ENCODE measurements at regions of chr1 and their contacts with region 1.

Region 1: DNA sequence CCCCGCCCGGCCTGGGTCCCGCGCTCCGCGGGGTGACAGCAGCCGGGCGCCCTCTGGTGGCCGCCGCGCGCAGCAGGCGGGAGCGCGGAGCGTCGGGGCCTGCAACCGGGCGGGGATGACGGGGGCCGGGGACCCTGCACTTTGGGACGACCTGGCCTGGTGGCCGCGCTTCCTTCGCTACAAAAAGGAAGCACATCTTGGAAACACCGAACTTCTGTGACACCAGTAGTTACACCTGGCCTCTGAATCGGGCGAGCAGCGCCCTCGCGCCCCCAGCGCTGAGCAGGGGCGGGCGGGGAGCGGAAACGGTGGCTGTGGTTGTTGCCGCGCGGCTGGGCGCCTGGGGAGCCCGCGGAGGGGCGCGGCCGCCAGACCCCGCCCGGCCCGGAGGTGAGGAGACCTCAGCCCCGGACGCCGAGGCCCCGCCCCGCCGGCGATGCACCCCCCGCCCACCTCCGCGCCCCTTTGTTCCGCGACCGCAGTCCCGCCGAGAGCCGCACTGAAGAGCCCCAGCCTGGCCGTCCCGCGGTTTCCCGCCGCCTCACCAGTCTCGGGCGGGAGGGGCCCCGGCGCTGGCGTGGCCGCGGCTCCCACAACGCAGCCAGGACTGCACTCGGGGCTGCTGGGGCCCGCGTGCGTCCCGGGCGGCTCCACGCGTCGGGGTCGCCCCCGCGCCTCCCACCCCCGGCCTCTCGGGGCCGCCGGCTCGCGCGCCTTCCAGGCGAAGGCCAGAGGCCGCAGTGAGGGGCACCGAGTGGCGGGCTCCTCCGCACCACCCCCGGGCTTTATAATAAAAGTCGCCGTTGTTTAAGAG is 59.3 kb downstream of the H3-3A start:
- DNase-seq: peak; percentile 71
- H3K4me3 ChIP-seq: peak overlapping the region; percentile 72
- H3K27ac ChIP-seq: peak overlapping the region; percentile 84
- H3K4me1 ChIP-seq: peaks cover 6% of the 10 kb centered on the region
- H3K27me3 ChIP-seq: no peaks in the 10 kb centered on the region
- CTCF ChIP-seq: peak; percentile 63

Region 2: GRCh38 chr1:225881969-225882693 is 239.7 kb before region 1 on chr1 and contains the start of gene TMEM63A:
- CTCF ChIA-PET with region 1: no interaction called
- POLR2A ChIA-PET with region 1: no interaction called
- intact Hi-C with region 1: no loop called
- DNase-seq: peak; percentile 90
- H3K4me3 ChIP-seq: peak within 1 kb of the TSS; percentile 78
- H3K27ac ChIP-seq: peak within 1 kb of the TSS; percentile 67
- H3K4me1 ChIP-seq: peaks cover 6% of the 10 kb centered on the region
- H3K27me3 ChIP-seq: no peaks in the 10 kb centered on the region
- CTCF ChIP-seq: peak; percentile 43
- total RNA-seq, gene TMEM63A: 25.3 and 31.2 TPM in 2 replicates

Region 3: GRCh38 chr1:225999227-225999911 is 122.4 kb before region 1 on chr1 and contains the start of gene SDE2:
- CTCF ChIA-PET with region 1: no interaction called
- POLR2A ChIA-PET with region 1: no interaction called
- intact Hi-C with region 1: loop called (anchors 5 kb)
- DNase-seq: peak; percentile 99
- H3K4me3 ChIP-seq: peak within 1 kb of the TSS; percentile 92
- H3K27ac ChIP-seq: peak within 1 kb of the TSS; percentile 87
- H3K4me1 ChIP-seq: peaks cover 41% of the 10 kb centered on the region
- H3K27me3 ChIP-seq: no peaks in the 10 kb centered on the region
- CTCF ChIP-seq: no peak
- total RNA-seq, gene SDE2: 26.7 and 27.7 TPM in 2 replicates

Region 4: GRCh38 chr1:226019572-226019971 is 102.2 kb before region 1 on chr1:
- CTCF ChIA-PET with region 1: no interaction called
- POLR2A ChIA-PET with region 1: no interaction called
- intact Hi-C with region 1: no loop called
- DNase-seq: no peak
- H3K4me3 ChIP-seq: no peak overlapping the region
- H3K27ac ChIP-seq: no peak overlapping the region
- H3K4me1 ChIP-seq: no peaks in the 10 kb centered on the region
- H3K27me3 ChIP-seq: no peaks in the 10 kb centered on the region
- CTCF ChIP-seq: no peak

Region 5: DNA sequence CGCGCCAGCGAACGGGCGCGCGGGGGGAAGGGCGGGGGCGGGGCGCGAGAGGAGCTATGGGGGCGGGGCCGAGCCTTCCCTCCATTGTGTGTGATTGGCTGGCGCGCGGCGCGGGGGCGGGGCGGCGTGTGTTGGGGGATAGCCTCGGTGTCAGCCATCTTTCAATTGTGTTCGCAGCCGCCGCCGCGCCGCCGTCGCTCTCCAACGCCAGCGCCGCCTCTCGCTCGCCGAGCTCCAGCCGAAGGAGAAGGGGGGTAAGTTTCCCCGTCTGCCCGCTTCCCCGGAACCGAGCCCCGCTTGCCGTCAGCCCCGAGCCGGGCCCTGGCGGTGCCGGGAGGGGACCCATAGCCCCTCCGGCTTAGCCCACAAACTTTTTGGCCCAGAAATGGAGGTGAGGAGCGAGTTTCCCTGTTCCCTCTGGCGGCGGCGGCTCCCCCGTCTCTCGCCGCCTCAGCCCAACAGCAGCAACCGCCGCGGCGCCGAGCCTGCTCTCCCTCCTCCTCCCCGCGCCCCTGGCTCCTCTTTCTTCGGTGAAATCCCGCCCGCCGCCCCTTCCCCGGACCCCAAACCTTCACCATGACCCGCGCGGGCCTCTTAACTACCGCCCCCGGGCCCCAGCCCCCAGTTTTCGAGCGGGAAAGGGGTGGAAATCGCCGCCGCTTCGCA is 59.1 kb before region 1 on chr1 and contains the start of gene H3-3A:
- CTCF ChIA-PET with region 1: interaction called, 12 read pairs
- POLR2A ChIA-PET with region 1: no interaction called
- intact Hi-C with region 1: loop called (anchors 1 kb)
- DNase-seq: peak; percentile 97
- H3K4me3 ChIP-seq: peak within 1 kb of the TSS; percentile 76
- H3K27ac ChIP-seq: peak within 1 kb of the TSS; percentile 99
- H3K4me1 ChIP-seq: peaks cover 21% of the 10 kb centered on the region
- H3K27me3 ChIP-seq: no peaks in the 10 kb centered on the region
- CTCF ChIP-seq: 0 out of 2 replicates have a peak, but pooled peaks have one; percentile 18
- total RNA-seq, gene H3-3A: 638 and 640 TPM in 2 replicates

Region 6: DNA sequence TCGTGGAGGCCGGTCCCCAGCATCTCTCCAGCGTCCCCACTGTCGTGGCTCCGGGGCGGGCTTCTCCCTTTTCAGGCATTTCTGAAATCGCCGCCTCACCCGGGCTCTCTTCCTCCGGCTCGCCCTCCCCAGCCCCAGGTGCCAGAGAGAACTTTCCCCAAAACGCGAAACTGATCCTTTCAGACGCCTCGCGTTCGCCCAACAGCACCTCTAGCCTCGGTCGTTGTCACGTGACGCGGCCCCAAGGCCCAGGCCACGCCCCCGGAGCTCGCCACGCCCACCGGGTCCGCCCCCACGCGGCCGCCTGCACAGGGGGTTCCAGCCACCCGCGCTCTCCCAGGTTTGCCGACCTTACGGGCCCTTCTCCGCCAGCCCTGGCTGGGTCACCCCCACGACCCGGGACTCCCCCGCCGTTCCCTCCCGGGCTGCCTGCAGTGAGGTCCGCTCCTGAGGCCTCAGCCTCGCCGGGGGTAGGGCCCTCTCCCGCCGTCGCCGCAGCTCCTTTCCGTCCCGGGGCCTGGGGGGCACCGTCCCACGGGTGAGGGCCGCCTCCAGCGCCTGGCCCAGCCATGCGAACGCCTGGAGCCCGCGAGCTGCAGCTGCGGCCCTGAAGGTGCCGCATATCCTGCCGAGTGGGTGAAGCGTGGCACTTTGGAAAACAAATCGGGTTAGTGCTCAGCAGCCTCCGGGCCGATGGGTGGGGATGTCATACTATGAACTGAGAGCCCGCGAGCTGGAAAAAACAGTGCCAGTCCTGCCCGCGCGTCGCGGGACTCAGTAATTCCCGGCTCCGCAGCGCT is 38.3 kb before region 1 on chr1:
- CTCF ChIA-PET with region 1: no interaction called
- POLR2A ChIA-PET with region 1: no interaction called
- intact Hi-C with region 1: loop called (anchors 5 kb)
- DNase-seq: peak; percentile 88
- H3K4me3 ChIP-seq: peak overlapping the region; percentile 77
- H3K27ac ChIP-seq: peak overlapping the region; percentile 76
- H3K4me1 ChIP-seq: peaks cover 5% of the 10 kb centered on the region
- H3K27me3 ChIP-seq: no peaks in the 10 kb centered on the region
- CTCF ChIP-seq: peak; percentile 17; the same call in 1 of the 2 replicates

Region 7: DNA sequence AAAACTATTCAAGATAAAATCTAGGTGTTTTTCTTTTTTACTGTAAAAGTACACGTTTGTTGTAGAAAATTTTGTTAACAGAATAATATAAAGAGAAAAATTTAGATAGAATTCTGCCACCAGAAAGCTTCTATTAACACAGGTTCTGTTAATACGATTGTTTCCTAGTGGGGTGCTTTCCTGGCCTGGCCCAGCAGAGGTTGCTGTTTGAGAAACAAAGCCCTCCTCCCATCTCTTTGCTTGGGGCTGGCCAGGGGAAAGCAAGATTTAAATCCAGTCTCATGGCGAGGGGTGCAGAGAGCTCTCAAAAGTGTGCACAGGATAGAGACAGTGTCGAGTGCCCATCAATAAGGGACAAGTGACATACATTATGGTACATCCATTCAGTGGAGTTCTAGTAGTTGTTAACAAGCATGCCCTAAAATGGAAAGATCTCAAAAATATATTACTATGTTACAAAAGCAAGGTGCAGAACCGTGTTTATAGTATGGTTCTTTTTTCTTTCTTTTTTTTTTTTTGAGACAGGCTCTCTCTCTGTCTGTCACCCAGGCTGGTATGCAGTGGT is 79.3 kb after region 1 on chr1:
- CTCF ChIA-PET with region 1: interaction called, 13 read pairs
- POLR2A ChIA-PET with region 1: no interaction called
- intact Hi-C with region 1: loop called (anchors 1 kb)
- DNase-seq: peak; percentile 55
- H3K4me3 ChIP-seq: no peak overlapping the region
- H3K27ac ChIP-seq: no peak overlapping the region
- H3K4me1 ChIP-seq: no peaks in the 10 kb centered on the region
- H3K27me3 ChIP-seq: no peaks in the 10 kb centered on the region
- CTCF ChIP-seq: peak; percentile 69

Region 8: DNA sequence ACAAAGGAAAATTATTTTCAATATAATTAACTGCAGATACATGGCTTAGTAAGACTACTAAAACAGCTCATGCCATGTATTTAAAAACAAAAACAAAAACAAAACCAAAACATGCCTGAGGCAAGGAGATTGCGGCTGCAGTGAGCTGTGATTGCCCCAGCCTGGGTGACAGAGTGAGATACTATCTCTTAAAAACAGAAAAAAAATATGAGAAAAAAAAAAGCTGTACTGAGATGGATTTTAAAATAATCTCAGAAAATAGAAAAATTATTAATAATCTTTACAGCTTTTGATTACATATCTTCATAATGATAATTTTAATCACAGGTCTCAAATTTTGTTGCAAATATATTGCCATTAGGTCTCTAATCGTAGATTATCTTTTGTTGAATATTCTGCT is 211.2 kb after region 1 on chr1:
- CTCF ChIA-PET with region 1: interaction called, 8 read pairs
- POLR2A ChIA-PET with region 1: no interaction called
- intact Hi-C with region 1: loop called (anchors 2 kb)
- DNase-seq: no peak
- H3K4me3 ChIP-seq: no peak overlapping the region
- H3K27ac ChIP-seq: no peak overlapping the region
- H3K4me1 ChIP-seq: no peaks in the 10 kb centered on the region
- H3K27me3 ChIP-seq: no peaks in the 10 kb centered on the region
- CTCF ChIP-seq: no peak

Measured in A673 (cell line).